H1 (cell line): ENCODE measurements at regions of chr1 and their contacts with region 1.

Region 1: DNA sequence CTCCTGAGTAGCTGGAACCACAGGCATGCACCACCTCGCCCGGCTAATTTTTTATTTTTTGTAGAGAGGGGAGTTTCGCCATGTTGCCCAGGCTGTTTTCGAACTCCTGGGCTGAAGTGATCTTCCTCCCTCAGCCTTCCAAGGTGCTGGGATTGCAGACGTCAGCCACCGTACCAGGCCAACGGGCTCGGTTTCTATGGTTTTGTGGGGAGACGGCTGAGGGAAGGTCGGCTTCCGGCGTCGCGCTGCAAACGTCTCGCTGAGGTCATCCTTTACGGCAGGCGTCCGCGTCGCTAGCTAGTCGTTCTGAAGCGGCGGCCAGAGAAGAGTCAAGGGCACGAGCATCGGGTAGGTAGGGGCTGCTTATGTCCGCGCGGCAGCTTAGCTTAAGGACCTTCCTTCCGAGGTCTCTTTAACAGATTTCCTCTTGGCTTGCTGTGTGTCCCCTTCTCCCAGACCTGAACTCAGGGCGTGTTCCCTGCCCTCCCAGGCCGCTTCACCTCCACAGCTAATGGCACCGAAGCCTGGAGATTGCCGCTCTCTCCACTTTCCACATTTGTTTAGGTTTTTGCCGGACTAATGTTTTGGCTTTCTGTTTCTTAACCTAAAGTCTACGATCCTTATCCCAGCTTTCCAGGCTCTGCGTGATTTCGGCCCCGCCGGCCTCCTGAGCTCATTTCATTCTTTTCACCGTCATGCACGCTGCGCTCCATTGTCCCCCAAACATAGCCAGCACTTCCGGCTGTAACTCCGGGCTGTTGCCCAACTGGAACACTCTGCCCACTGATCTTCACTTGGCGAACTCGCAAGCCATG is at the start of gene NDUFS5:
- DNase-seq: peak; percentile 72 to 85
- H3K4me3 ChIP-seq: peak within 1 kb of the TSS; percentile 85 to 98 (median 90)
- H3K27ac ChIP-seq: peak within 1 kb of the TSS; percentile 92
- H3K4me1 ChIP-seq: peaks cover 0 to 3% (median 2%) of the 10 kb centered on the region in 4 experiments; a peak in 1 of 7 replicates
- H3K27me3 ChIP-seq: no peaks in the 10 kb centered on the region; a peak in 1 of 7 replicates
- CTCF ChIP-seq: no peak
- EP300 ChIP-seq: no peak
- POLR2A ChIP-seq: peak; percentile 95 to 99
- RAD21 ChIP-seq: no peak
- total RNA-seq, gene NDUFS5: 421 and 435 TPM in 2 replicates

Region 2: GRCh38 chr1:38898653-38899230 is 127.5 kb before region 1 on chr1:
- CTCF ChIA-PET with region 1: no interaction called
- POLR2A ChIA-PET with region 1: no interaction called
- DNase-seq: no peak
- H3K4me3 ChIP-seq: no peak overlapping the region
- H3K27ac ChIP-seq: no peak overlapping the region
- H3K4me1 ChIP-seq: no peaks in the 10 kb centered on the region
- H3K27me3 ChIP-seq: no peaks in the 10 kb centered on the region
- CTCF ChIP-seq: no peak
- EP300 ChIP-seq: no peak
- POLR2A ChIP-seq: no peak
- RAD21 ChIP-seq: no peak

Region 3: DNA sequence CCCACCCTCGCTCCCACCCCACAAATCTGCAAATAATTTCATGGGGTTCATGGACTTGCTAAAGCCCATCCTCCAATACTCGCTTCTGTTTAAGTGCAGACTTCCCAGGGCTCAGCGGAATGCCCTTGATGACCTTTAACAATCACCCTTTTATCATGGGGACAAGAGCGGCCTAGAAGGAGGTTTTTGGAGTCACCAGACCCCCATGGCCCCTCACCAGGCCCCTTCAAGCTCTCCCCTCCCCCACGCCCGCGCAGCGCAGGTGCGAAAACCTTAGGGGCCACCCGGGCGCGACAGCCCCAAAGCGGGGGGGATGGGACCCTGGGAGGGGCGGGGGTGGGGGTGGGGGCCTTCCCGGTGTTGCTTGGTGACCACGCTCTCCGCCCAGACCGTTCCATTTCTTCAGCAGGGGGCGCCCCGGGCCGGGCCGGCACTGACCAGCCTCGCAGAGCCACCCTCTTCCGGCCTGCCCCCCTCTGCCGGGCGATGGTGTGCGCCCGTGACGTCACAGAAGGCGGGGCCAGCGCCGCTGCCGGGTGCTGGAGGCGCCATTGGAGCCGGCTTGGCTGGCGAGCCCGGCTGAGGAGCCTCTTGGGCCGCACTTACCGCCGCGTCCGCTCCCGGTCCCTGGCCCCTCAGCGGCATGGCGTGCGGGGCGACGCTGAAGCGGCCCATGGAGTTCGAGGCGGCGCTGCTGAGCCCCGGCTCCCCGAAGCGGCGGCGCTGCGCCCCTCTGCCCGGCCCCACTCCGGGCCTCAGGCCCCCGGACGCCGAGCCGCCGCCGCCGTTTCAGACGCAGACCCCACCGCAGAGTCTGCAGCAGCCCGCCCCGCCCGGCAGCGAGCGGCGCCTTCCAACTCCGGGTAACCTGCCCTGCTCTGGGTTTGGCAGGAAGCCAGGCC is 35.3 kb before region 1 on chr1 and contains the start of gene AKIRIN1:
- CTCF ChIA-PET with region 1: interaction called, 3 read pairs
- POLR2A ChIA-PET with region 1: interaction called, 60 read pairs
- DNase-seq: peak; percentile 89 to 99
- H3K4me3 ChIP-seq: peak within 1 kb of the TSS; percentile 83 to 100 (median 92)
- H3K27ac ChIP-seq: peak within 1 kb of the TSS; percentile 95
- H3K4me1 ChIP-seq: peaks cover 5 to 18% (median 13%) of the 10 kb centered on the region in 4 experiments
- H3K27me3 ChIP-seq: no peaks in the 10 kb centered on the region
- CTCF ChIP-seq: no peak
- EP300 ChIP-seq: peak in 1 of 2 experiments; percentile 100; a peak in 2 of 3 replicates
- POLR2A ChIP-seq: peak; percentile 93 to 95
- RAD21 ChIP-seq: peak in 1 of 2 experiments; percentile 25; a peak in 2 of 4 replicates
- total RNA-seq, gene AKIRIN1: 236 TPM in 2 replicates

Region 4: DNA sequence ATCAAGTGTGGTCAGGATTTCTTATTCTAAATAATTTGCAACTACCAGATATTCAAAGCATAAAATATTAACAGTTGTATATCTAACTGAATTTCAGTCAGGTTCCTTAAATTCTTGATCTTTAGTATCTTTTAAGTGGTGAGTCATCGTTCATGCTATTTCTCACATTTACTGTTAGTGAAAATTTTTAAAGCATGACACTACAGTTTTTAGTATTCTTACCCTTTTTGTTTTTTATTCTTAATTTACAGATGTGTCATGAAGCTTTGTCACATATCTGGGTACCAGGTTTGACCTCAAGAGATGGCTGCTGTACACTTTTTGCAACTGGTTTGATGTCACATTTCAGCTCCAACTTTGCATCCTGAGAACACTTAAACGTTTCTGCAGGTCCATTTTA is 22.5 kb before region 1 on chr1:
- CTCF ChIA-PET with region 1: interaction called, 12 read pairs
- POLR2A ChIA-PET with region 1: interaction called, 182 read pairs
- DNase-seq: no peak
- H3K4me3 ChIP-seq: no peak overlapping the region
- H3K27ac ChIP-seq: no peak overlapping the region
- H3K4me1 ChIP-seq: peaks cover 0 to 10% (median 7%) of the 10 kb centered on the region in 4 experiments
- H3K27me3 ChIP-seq: no peaks in the 10 kb centered on the region
- CTCF ChIP-seq: no peak
- EP300 ChIP-seq: no peak
- POLR2A ChIP-seq: no peak
- RAD21 ChIP-seq: no peak

Region 5: DNA sequence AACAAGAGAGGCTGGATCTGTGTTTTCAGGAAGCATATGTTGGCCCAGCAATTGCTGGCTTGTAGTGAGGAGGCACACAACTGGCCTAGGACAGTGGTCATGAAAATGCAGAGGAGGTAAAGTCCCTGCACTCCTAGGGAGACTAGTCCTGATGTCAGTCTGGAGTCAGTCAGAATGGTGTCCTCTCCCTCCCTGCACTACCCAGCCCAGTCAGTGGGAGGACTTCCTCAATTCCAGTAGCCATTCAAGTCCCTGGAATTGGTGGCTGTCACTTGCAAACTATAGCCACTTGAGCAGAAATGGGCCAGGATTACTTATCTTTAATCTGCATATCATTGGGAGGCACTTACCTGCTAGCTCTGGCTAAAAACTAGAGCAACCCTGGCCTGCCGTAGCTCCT is 18.5 kb after region 1 on chr1:
- CTCF ChIA-PET with region 1: interaction called, 3 read pairs
- POLR2A ChIA-PET with region 1: interaction called, 12 read pairs
- DNase-seq: no peak
- H3K4me3 ChIP-seq: no peak overlapping the region
- H3K27ac ChIP-seq: no peak overlapping the region
- H3K4me1 ChIP-seq: no peaks in the 10 kb centered on the region
- H3K27me3 ChIP-seq: no peaks in the 10 kb centered on the region
- CTCF ChIP-seq: no peak
- EP300 ChIP-seq: no peak
- POLR2A ChIP-seq: no peak
- RAD21 ChIP-seq: no peak

Region 6: DNA sequence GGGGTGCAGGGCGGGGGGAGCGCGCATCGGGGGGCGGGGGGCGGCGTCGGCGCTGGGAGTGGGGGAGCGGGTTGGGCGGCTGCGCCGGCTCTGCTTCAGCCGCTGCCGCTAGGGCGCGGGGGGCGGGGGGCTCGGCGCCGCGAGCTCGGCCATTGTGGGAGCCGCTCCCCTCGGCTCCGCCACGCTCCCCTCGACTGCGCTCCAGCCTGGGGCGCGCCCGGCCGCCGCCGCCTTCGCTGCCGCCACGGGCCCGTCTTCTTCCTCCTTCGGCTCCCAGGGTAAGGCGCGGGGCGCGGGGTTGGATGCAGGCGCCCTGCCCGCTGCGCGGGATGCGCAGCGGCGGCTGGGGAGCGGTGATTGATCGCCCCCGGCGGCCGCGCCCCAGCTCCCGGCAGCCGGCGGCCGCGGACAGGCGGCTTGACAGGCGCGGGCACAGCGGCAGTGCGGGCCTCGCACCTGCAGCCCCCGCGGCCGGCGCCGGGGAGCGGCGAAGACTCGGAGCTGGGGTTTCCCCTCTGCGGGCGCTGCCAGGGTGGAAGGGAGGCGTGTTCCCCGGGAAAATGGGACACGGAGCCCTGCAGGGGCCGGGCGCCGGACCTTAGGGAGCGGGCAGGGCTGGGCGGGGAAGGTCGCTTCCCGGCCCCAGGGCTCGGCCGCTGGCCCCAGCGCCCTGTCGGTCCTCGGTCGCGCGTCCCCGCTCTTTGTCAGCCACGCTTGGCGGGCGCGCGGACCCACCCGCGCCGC is 55.2 kb after region 1 on chr1:
- CTCF ChIA-PET with region 1: interaction called, 3 read pairs
- POLR2A ChIA-PET with region 1: interaction called, 16 read pairs
- DNase-seq: peak in 1 of 2 experiments; percentile 77
- H3K4me3 ChIP-seq: peak overlapping the region; percentile 50 to 72 (median 56)
- H3K27ac ChIP-seq: no peak overlapping the region
- H3K4me1 ChIP-seq: peaks cover 6 to 10% (median 6%) of the 10 kb centered on the region in 4 experiments
- H3K27me3 ChIP-seq: peaks cover 0 to 12% (median 8%) of the 10 kb centered on the region in 4 experiments; a peak in 6 of 7 replicates
- CTCF ChIP-seq: no peak
- EP300 ChIP-seq: no peak
- POLR2A ChIP-seq: no peak; a peak in 1 of 3 replicates
- RAD21 ChIP-seq: no peak; a peak in 1 of 4 replicates